Dendritic cell treated with granulocyte-macrophage colony-stimulating factor and Interleukin-4, amounts not matched to agents 40 ng/mL and 50 ng/mL, for 4 days (primary cell): ENCODE measurements at regions of chr18 and their contacts with region 1.

Region 1: GRCh38 chr18:32760391-32760790 is 12.4 kb downstream of the KLHL14 start:
- H3K4me3 Mint-ChIP-seq: no peak overlapping the region
- H3K27ac Mint-ChIP-seq: no peak overlapping the region
- H3K4me1 Mint-ChIP-seq: no peaks in the 10 kb centered on the region
- H3K27me3 Mint-ChIP-seq: no peaks in the 10 kb centered on the region

Region 2: GRCh38 chr18:32707147-32707546 is 53.2 kb before region 1 on chr18:
- intact Hi-C with region 1: loop called (anchors 10 kb)
- H3K4me3 Mint-ChIP-seq: no peak overlapping the region
- H3K27ac Mint-ChIP-seq: no peak overlapping the region
- H3K4me1 Mint-ChIP-seq: no peaks in the 10 kb centered on the region
- H3K27me3 Mint-ChIP-seq: no peaks in the 10 kb centered on the region